A673 (cell line): ENCODE measurements at regions of chr9 and their contacts with region 1.

Region 1: GRCh38 chr9:123349691-123350480 is 6.1 kb upstream of the CRB2 start:
- DNase-seq: peak; percentile 85
- H3K4me3 ChIP-seq: no peak overlapping the region
- H3K27ac ChIP-seq: peak overlapping the region; percentile 48
- H3K4me1 ChIP-seq: peaks cover 40% of the 10 kb centered on the region
- H3K27me3 ChIP-seq: no peaks in the 10 kb centered on the region
- CTCF ChIP-seq: peak; percentile 93

Region 2: GRCh38 chr9:122464633-122465567 is 885.0 kb before region 1 on chr9:
- CTCF ChIA-PET with region 1: interaction called, 6 read pairs
- POLR2A ChIA-PET with region 1: no interaction called
- intact Hi-C with region 1: loop called (anchors 2 kb)
- DNase-seq: peak; percentile 91
- H3K4me3 ChIP-seq: peak overlapping the region; percentile 50
- H3K27ac ChIP-seq: no peak overlapping the region
- H3K4me1 ChIP-seq: no peaks in the 10 kb centered on the region
- H3K27me3 ChIP-seq: peaks cover 43% of the 10 kb centered on the region
- CTCF ChIP-seq: peak; percentile 85

Region 3: GRCh38 chr9:122810306-122810946 is 539.5 kb before region 1 on chr9:
- CTCF ChIA-PET with region 1: no interaction called
- POLR2A ChIA-PET with region 1: no interaction called
- intact Hi-C with region 1: loop called (anchors 5 kb)
- DNase-seq: peak; percentile 86
- H3K4me3 ChIP-seq: no peak overlapping the region
- H3K27ac ChIP-seq: no peak overlapping the region
- H3K4me1 ChIP-seq: no peaks in the 10 kb centered on the region
- H3K27me3 ChIP-seq: no peaks in the 10 kb centered on the region
- CTCF ChIP-seq: peak; percentile 82

Region 4: GRCh38 chr9:122827761-122828093 is 522.2 kb before region 1 on chr9:
- CTCF ChIA-PET with region 1: no interaction called
- POLR2A ChIA-PET with region 1: no interaction called
- intact Hi-C with region 1: loop called (anchors 2 kb)
- DNase-seq: peak; percentile 47
- H3K4me3 ChIP-seq: peak overlapping the region; percentile 95
- H3K27ac ChIP-seq: peak overlapping the region; percentile 97
- H3K4me1 ChIP-seq: peaks cover 11% of the 10 kb centered on the region
- H3K27me3 ChIP-seq: no peaks in the 10 kb centered on the region
- CTCF ChIP-seq: no peak

Region 5: DNA sequence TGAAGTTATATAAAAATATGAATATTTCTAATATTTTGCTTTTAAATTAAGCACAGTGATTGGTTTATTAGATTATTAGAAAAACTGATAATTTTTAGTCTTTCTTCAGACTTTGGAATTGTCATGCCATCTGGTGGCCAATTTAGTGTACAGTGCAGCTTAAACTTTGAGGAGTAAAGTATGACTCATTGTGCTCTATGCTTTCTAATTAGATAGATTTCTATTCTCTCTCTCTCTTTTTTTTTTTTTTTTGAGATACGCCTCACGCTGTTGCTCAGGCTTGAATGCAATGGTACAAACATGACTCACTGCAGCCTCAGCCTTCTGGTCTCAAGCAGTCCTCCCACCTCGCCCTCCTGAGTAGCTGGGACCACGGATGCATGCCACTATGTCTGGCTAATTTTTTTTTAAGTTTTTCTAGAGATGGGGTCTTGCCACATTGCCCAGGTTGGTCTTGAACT is 358.5 kb before region 1 on chr9:
- CTCF ChIA-PET with region 1: interaction called, 9 read pairs
- POLR2A ChIA-PET with region 1: no interaction called
- intact Hi-C with region 1: loop called (anchors 5 kb)
- DNase-seq: peak; percentile 83
- H3K4me3 ChIP-seq: no peak overlapping the region
- H3K27ac ChIP-seq: no peak overlapping the region
- H3K4me1 ChIP-seq: peaks cover 9% of the 10 kb centered on the region
- H3K27me3 ChIP-seq: no peaks in the 10 kb centered on the region
- CTCF ChIP-seq: peak; percentile 82

Region 6: GRCh38 chr9:123081824-123082223 is 268.1 kb before region 1 on chr9:
- CTCF ChIA-PET with region 1: interaction called, 13 read pairs
- POLR2A ChIA-PET with region 1: no interaction called
- intact Hi-C with region 1: loop called (anchors 1 kb)
- DNase-seq: peak; percentile 78
- H3K4me3 ChIP-seq: no peak overlapping the region
- H3K27ac ChIP-seq: peak overlapping the region; percentile 40
- H3K4me1 ChIP-seq: peaks cover 43% of the 10 kb centered on the region
- H3K27me3 ChIP-seq: no peaks in the 10 kb centered on the region
- CTCF ChIP-seq: peak; percentile 81

Region 7: DNA sequence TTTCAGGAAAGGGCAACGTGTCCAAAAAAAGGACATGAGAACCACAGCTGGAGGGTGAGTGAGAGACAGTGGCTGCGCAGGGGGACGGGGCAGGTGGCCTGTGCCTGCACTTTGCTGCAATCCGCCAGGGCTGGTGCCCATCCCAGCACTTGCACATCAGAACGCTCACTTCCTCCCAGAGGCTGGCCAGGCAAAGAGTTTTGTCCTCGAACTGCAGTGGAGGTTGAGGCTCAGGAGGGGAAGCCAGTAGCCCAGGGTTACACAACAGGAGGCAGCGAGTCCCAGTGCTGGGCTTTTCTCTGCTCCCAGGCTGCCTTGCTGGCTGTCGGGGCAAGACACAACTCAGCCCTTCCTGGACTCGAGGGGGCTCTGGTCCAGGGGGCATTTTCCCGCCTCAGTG is 39.2 kb after region 1 on chr9:
- CTCF ChIA-PET with region 1: interaction called, 4 read pairs
- POLR2A ChIA-PET with region 1: no interaction called
- intact Hi-C with region 1: loop called (anchors 1 kb)
- DNase-seq: no peak
- H3K4me3 ChIP-seq: no peak overlapping the region
- H3K27ac ChIP-seq: no peak overlapping the region
- H3K4me1 ChIP-seq: no peaks in the 10 kb centered on the region
- H3K27me3 ChIP-seq: no peaks in the 10 kb centered on the region
- CTCF ChIP-seq: no peak

Region 8: GRCh38 chr9:123725389-123725788 is 375.5 kb after region 1 on chr9:
- CTCF ChIA-PET with region 1: no interaction called
- POLR2A ChIA-PET with region 1: no interaction called
- intact Hi-C with region 1: no loop called
- DNase-seq: no peak
- H3K4me3 ChIP-seq: no peak overlapping the region
- H3K27ac ChIP-seq: no peak overlapping the region
- H3K4me1 ChIP-seq: no peaks in the 10 kb centered on the region
- H3K27me3 ChIP-seq: no peaks in the 10 kb centered on the region
- CTCF ChIP-seq: no peak